Adrenal gland (tissue), 19 donors: ENCODE measurements at regions of chr4 and their contacts with region 1.

Region 1: GRCh38 chr4:84966383-84967242 is at the start of gene WDFY3:
- DNase-seq: peak; percentile 86 to 95 (median 92)
- H3K4me3 ChIP-seq: peak within 1 kb of the TSS; percentile 53 to 93 (median 73)
- H3K27ac ChIP-seq: peak within 1 kb of the TSS; percentile 78 to 93 (median 88)
- H3K4me1 ChIP-seq: peaks cover 0 to 37% of the 10 kb centered on the region in 2 donors
- H3K27me3 ChIP-seq: no peaks in the 10 kb centered on the region
- CTCF ChIP-seq: peak in 1 of 6 experiments; percentile 10
- POLR2A ChIP-seq: peak in 1 of 2 donors; percentile 89
- total RNA-seq, gene WDFY3: 70.2 to 284 (median 103) TPM

Region 2: GRCh38 chr4:84750253-84750959 is 216.2 kb before region 1 on chr4:
- intact Hi-C with region 1: loop called (anchors 2 to 5 kb)
- DNase-seq: peak in 3 of 7 donors; percentile 22 to 30 (median 27)
- H3K4me3 ChIP-seq: no peak overlapping the region
- H3K27ac ChIP-seq: peak overlapping the region in 2 of 5 donors; percentile 15 to 18
- H3K4me1 ChIP-seq: peaks cover 5 to 19% of the 10 kb centered on the region in 2 donors
- H3K27me3 ChIP-seq: no peaks in the 10 kb centered on the region
- CTCF ChIP-seq: peak; percentile 44 to 81 (median 66)
- POLR2A ChIP-seq: no peak

Region 3: GRCh38 chr4:84870398-84871163 is 96.0 kb before region 1 on chr4:
- intact Hi-C with region 1: loop called in 1 of 2 experiments (anchors 10 kb)
- DNase-seq: peak in 1 of 7 donors; percentile 22
- H3K4me3 ChIP-seq: no peak overlapping the region
- H3K27ac ChIP-seq: peak overlapping the region in 1 of 5 donors; percentile 26
- H3K4me1 ChIP-seq: peaks cover 0 to 8% of the 10 kb centered on the region in 2 donors
- H3K27me3 ChIP-seq: no peaks in the 10 kb centered on the region
- CTCF ChIP-seq: no peak
- POLR2A ChIP-seq: no peak

Region 4: GRCh38 chr4:84907145-84907544 is 59.5 kb before region 1 on chr4:
- intact Hi-C with region 1: no loop called
- DNase-seq: no peak
- H3K4me3 ChIP-seq: no peak overlapping the region
- H3K27ac ChIP-seq: no peak overlapping the region
- H3K4me1 ChIP-seq: peaks cover 5 to 12% of the 10 kb centered on the region in 2 donors
- H3K27me3 ChIP-seq: no peaks in the 10 kb centered on the region
- CTCF ChIP-seq: no peak
- POLR2A ChIP-seq: no peak

Region 5: GRCh38 chr4:85854546-85854945 is 887.9 kb after region 1 on chr4:
- intact Hi-C with region 1: no loop called
- DNase-seq: no peak
- H3K4me3 ChIP-seq: no peak overlapping the region
- H3K27ac ChIP-seq: no peak overlapping the region
- H3K4me1 ChIP-seq: no peaks in the 10 kb centered on the region
- H3K27me3 ChIP-seq: no peaks in the 10 kb centered on the region
- CTCF ChIP-seq: no peak
- POLR2A ChIP-seq: no peak